ENCODE measurements at regions of chrX and their contacts with region 1.

Region 1: GRCh38 chrX:84118761-84119160 is 69.2 kb downstream of the RPS6KA6 start:
- DNase-seq: no peak
- ATAC-seq: no peak
- H3K4me3 Mint-ChIP-seq: no peak overlapping the region
- H3K27ac Mint-ChIP-seq: no peak overlapping the region
- H3K4me1 Mint-ChIP-seq: no peaks in the 10 kb centered on the region
- H3K27me3 Mint-ChIP-seq: no peaks in the 10 kb centered on the region

Region 2: GRCh38 chrX:85666471-85666870 is 1547.7 kb after region 1 on chrX:
- CTCF ChIA-PET with region 1: no interaction called
- POLR2A ChIA-PET with region 1: no interaction called
- intact Hi-C with region 1: loop called in 1 of 2 experiments (anchors 10 kb)
- DNase-seq: no peak
- ATAC-seq: no peak
- H3K4me3 Mint-ChIP-seq: no peak overlapping the region
- H3K27ac Mint-ChIP-seq: no peak overlapping the region
- H3K4me1 Mint-ChIP-seq: no peaks in the 10 kb centered on the region
- H3K27me3 Mint-ChIP-seq: no peaks in the 10 kb centered on the region